Activated CD4-positive, alpha-beta T cell treated with anti-CD3 and anti-CD28 coated beads for 36 hours (primary cell): ENCODE measurements at regions of chr12 and their contacts with region 1.

Region 1: DNA sequence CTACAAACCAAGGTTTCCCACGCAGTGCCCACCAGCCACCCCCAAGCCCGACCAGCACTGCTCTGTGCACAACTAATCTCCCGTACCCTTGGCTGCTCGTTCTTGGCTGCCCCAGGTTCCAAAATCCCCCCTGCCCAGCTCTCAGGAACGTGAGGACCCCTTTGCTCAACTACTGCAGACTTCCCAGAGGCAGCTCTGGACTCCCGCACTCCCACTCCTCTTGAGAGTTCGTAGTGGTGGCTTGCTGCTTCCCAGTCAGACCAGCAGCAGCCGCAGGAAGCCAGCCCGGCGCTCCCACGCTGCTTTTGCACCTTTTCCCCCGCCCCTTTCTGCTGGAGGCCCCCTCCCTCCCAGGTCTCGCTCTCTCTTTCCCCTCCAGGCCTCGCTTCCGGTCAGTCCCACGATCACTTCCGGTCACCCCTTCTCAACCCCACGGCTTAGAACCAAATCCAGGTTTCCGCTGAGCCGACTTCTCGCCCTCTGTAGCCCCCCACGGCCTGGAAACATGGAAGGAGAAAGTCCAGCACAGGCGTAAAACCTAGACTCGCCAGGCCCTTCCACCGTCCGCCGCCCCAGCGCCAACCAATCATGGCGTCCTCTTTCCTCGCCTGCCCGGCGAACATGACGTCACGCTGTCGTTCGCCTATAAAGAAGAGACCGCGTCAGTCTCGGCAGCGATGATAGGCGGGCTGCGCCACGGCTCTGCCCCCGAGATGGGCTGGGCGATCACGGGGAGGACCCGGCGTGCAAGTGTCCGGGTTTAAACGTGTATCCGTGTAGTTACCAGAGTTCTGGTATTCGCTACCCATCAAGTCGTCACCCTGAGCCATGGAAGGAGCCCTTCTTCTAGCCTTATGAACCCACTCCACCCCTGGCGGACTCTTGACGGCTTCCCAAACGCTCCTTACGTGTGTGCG is at the start of gene TFCP2:
- DNase-seq: peak; percentile 97
- ATAC-seq: peak; percentile 99
- H3K4me3 Mint-ChIP-seq: no peak within 1 kb of the TSS
- H3K27ac Mint-ChIP-seq: peak within 1 kb of the TSS; percentile 78
- H3K4me1 Mint-ChIP-seq: peaks cover 10% of the 10 kb centered on the region
- H3K27me3 Mint-ChIP-seq: no peaks in the 10 kb centered on the region
- total RNA-seq, gene TFCP2: 39.5 to 47.3 TPM

Region 2: GRCh38 chr12:50825372-50825838 is 347.4 kb before region 1 on chr12:
- CTCF ChIA-PET with region 1: interaction called, 3 read pairs
- POLR2A ChIA-PET with region 1: no interaction called
- intact Hi-C with region 1: loop called in 1 of 2 experiments (anchors 5 kb)
- DNase-seq: no peak
- ATAC-seq: peak; percentile 61
- H3K4me3 Mint-ChIP-seq: no peak overlapping the region
- H3K27ac Mint-ChIP-seq: peak overlapping the region; percentile 35
- H3K4me1 Mint-ChIP-seq: peaks cover 6% of the 10 kb centered on the region
- H3K27me3 Mint-ChIP-seq: no peaks in the 10 kb centered on the region

Region 3: GRCh38 chr12:51083126-51083833 is 89.5 kb before region 1 on chr12 and contains the start of gene CSRNP2:
- CTCF ChIA-PET with region 1: no interaction called
- POLR2A ChIA-PET with region 1: no interaction called
- intact Hi-C with region 1: loop called (anchors 1 to 2 kb)
- DNase-seq: peak; percentile 97
- ATAC-seq: peak; percentile 99
- H3K4me3 Mint-ChIP-seq: peak within 1 kb of the TSS; percentile 95
- H3K27ac Mint-ChIP-seq: peak within 1 kb of the TSS; percentile 86
- H3K4me1 Mint-ChIP-seq: peaks cover 46% of the 10 kb centered on the region
- H3K27me3 Mint-ChIP-seq: no peaks in the 10 kb centered on the region
- total RNA-seq, gene CSRNP2: 12.8 to 13.6 TPM

Region 4: GRCh38 chr12:51238510-51239334 is 65.9 kb after region 1 on chr12 and contains the start of gene DAZAP2:
- CTCF ChIA-PET with region 1: interaction called, 3 read pairs
- POLR2A ChIA-PET with region 1: interaction called, 3 read pairs
- intact Hi-C with region 1: loop called (anchors 1 kb)
- DNase-seq: peak; percentile 98
- ATAC-seq: peak; percentile 92
- H3K4me3 Mint-ChIP-seq: peak within 1 kb of the TSS; percentile 87
- H3K27ac Mint-ChIP-seq: peak within 1 kb of the TSS; percentile 100
- H3K4me1 Mint-ChIP-seq: peaks cover 36% of the 10 kb centered on the region
- H3K27me3 Mint-ChIP-seq: no peaks in the 10 kb centered on the region
- total RNA-seq, gene DAZAP2: 94.8 to 95.2 TPM

Region 5: DNA sequence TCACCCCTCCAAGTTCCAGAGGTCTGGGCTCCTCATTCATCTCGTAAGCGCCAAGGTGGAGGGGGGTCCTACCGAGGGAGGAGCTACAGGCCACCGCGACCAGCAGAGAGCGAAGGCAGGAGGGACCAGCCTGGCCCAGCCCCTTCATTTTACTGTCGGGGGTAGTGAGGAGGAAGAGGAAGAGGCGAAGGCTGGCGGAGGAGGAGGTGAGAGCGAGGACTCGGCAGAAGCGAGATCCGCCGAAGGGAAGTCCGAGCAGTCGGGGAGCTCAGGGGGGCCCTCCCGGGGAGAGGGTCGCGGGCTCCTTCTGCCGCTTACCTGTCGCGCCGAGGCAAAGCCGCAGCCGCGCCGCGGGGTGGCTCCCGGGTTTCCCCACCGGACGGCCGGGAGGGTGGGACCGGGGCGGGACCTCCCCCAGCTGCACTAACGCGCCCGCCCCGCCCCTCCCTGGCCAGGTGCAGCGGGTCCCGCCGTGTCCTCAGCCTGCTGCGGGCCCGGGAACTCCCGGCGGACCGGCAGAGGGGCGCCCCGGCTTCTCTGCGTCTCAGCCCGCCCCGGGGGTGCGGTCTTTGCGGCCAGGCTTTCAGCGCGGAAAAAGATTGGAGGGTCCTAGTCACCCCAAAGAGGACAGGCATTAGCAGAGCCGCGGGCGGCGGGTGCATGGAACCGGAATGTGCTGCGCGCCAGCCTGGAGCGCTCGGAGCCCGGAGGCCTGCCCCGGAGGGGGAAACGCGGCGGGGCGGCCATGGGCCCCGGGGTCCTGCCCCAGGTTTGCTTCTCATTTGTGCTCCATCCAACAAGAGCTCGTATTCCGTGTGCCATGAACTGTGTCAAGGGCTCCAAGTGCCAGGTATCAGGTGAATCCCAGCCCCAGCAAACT is 218.8 kb after region 1 on chr12 and contains the start of gene GALNT6:
- CTCF ChIA-PET with region 1: no interaction called
- POLR2A ChIA-PET with region 1: no interaction called
- intact Hi-C with region 1: loop called in 1 of 2 experiments (anchors 1 kb)
- DNase-seq: peak; percentile 78
- ATAC-seq: peak; percentile 43
- H3K4me3 Mint-ChIP-seq: peak within 1 kb of the TSS; percentile 85
- H3K27ac Mint-ChIP-seq: peak within 1 kb of the TSS; percentile 67
- H3K4me1 Mint-ChIP-seq: peaks cover 79% of the 10 kb centered on the region
- H3K27me3 Mint-ChIP-seq: no peaks in the 10 kb centered on the region
- total RNA-seq, gene GALNT6: 11.7 to 12.0 TPM